Adrenal gland (tissue), 19 donors: ENCODE measurements at regions of chr14 and their contacts with region 1.

Region 1: DNA sequence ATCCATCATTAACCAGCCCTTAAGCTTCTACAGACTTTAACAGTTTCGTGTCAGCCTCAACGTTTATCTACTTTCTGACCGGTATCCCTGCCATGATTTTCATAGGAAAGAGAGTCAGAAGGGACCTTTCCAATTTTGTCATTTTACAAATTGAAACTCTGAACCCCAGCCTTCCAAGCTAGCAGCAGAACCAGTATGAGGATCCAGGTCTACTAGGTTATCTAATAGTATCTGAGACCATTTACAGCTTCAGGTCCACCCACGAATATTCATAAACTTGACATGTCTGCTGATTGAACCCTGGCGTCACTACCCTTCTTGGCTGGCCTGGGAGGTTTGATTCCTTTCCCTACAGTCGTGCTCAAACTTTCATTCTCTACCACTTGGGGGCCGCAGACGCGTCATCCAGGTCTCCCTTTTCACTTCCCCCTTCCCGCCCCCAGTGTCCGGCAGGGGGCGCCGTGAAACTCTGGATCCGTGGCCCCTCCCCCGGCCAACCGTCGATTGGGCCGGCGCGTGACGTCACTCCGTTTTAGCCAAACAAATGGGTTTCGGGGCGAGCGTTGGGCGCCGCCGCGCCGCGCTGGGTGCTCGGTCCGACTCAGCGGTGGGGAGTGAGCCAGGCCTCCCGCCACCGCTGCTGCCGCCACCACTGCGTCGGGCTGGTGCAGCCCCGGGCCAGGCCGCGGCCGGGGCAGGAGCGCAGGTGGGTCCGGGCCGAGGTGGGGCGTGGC is at the start of gene FBXO34:
- DNase-seq: peak; percentile 97 to 100 (median 100)
- H3K4me3 ChIP-seq: peak within 1 kb of the TSS; percentile 43 to 86 (median 67)
- H3K27ac ChIP-seq: peak within 1 kb of the TSS; percentile 67 to 95 (median 92)
- H3K4me1 ChIP-seq: peaks cover 30 to 33% of the 10 kb centered on the region in 2 donors
- H3K27me3 ChIP-seq: no peaks in the 10 kb centered on the region
- CTCF ChIP-seq: peak; percentile 98 to 100 (median 100)
- POLR2A ChIP-seq: peak; percentile 95 to 96
- total RNA-seq, gene FBXO34: 12.7 to 31.0 (median 22.2) TPM

Region 2: DNA sequence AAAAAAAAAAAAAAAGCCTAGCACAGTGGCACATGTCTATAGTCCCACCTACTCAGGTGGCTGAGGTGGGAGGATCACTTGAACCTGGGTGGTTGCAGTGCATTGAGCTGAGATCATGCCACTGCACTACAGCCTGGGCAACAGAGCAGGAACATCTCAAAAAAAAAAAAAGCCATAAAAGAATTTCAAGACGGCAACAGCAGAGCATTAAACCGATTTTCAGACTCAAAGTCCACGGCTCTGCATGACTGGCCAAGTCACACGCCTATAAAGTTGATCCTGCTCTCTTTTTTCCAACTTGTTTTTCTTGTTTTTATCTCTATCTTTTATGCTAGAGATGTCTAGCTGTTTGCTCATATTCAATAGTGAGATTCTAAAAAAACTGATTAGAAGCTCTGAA is 45.6 kb after region 1 on chr14:
- intact Hi-C with region 1: no loop called
- DNase-seq: no peak
- H3K4me3 ChIP-seq: no peak overlapping the region
- H3K27ac ChIP-seq: no peak overlapping the region
- H3K4me1 ChIP-seq: no peaks in the 10 kb centered on the region
- H3K27me3 ChIP-seq: no peaks in the 10 kb centered on the region
- CTCF ChIP-seq: no peak
- POLR2A ChIP-seq: no peak

Region 3: GRCh38 chr14:55327179-55327578 is 56.2 kb after region 1 on chr14:
- intact Hi-C with region 1: no loop called
- DNase-seq: no peak
- H3K4me3 ChIP-seq: no peak overlapping the region
- H3K27ac ChIP-seq: no peak overlapping the region
- H3K4me1 ChIP-seq: peaks cover 7 to 19% of the 10 kb centered on the region in 2 donors
- H3K27me3 ChIP-seq: no peaks in the 10 kb centered on the region
- CTCF ChIP-seq: no peak
- POLR2A ChIP-seq: no peak

Region 4: GRCh38 chr14:55354500-55354899 is 83.5 kb after region 1 on chr14:
- intact Hi-C with region 1: loop called (anchors 5 to 10 kb)
- DNase-seq: peak; percentile 26 to 83 (median 53)
- H3K4me3 ChIP-seq: no peak overlapping the region
- H3K27ac ChIP-seq: no peak overlapping the region
- H3K4me1 ChIP-seq: no peaks in the 10 kb centered on the region
- H3K27me3 ChIP-seq: no peaks in the 10 kb centered on the region
- CTCF ChIP-seq: peak in 5 of 6 experiments; percentile 23 to 73 (median 62)
- POLR2A ChIP-seq: no peak